Cardiac septum (tissue), 1 donor: ENCODE measurements at regions of chr12 and their contacts with region 1.

Region 1: GRCh38 chr12:104456417-104456949 is at the start of gene CHST11:
- DNase-seq: peak; percentile 93
- total RNA-seq, gene CHST11: 6.1 TPM

Region 2: DNA sequence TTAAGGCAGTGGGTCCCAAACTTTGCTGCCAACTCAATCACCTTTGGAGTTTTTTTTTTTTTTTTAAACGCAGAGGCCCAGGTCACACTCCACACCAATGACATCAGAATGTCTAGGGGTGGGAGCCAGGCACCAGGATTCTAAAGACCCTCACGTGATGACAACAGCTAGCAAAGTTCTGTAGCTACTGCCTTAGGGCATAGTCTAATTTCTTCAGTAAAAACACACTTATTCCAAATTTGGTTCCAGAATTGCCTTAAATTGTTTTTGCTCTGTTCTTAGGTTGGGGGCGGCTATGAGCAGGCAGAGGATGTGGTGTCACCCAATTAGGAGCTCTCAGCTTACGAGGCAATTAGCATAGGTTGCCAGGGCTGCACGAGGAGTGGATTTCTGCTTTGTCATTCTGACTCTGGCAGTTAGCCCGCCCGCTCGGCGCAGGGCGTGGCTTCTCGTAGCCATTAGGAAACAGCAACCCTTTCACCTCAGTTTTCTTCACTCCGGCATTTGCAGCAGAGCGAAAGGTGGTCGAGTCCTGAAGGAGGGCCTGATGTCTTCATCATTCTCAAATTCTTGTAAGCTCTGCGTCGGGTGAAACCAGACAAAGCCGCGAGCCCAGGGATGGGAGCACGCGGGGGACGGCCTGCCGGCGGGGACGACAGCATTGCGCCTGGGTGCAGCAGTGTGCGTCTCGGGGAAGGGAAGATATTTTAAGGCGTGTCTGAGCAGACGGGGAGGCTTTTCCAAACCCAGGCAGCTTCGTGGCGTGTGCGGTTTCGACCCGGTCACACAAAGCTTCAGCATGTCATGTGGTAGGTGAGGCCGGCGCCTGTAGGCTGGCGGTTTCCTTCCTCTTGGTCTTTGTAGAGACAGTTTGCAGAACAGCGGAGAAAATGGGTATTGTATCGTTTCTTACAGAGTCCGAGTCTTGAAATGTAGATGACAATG is 169.7 kb before region 1 on chr12:
- intact Hi-C with region 1: loop called (anchors 5 kb)
- DNase-seq: peak; percentile 96

Region 3: GRCh38 chr12:104381731-104382480 is 74.6 kb before region 1 on chr12:
- intact Hi-C with region 1: loop called (anchors 5 kb)
- DNase-seq: peak; percentile 86

Region 4: GRCh38 chr12:104604070-104604994 is 147.8 kb after region 1 on chr12:
- intact Hi-C with region 1: loop called (anchors 5 kb)
- DNase-seq: peak; percentile 87

Region 5: GRCh38 chr12:104671407-104672098 is 215.1 kb after region 1 on chr12:
- intact Hi-C with region 1: loop called (anchors 2 kb)
- DNase-seq: peak; percentile 94

Region 6: GRCh38 chr12:104870797-104871196 is 414.3 kb after region 1 on chr12:
- intact Hi-C with region 1: loop called (anchors 5 kb)
- DNase-seq: no peak